ENCODE measurements at regions of chr7 and their contacts with region 1.

Region 1: GRCh38 chr7:24381894-24382505 is 98.0 kb downstream of the NPY start:
- H3K4me3 ChIP-seq: no peak overlapping the region
- H3K27ac ChIP-seq: no peak overlapping the region
- H3K4me1 ChIP-seq: no peaks in the 10 kb centered on the region
- CTCF ChIP-seq: 0 out of 2 replicates have a peak, but pooled peaks have one; percentile 30

Region 2: GRCh38 chr7:23938937-23939552 is 443.0 kb before region 1 on chr7:
- CTCF ChIA-PET with region 1: interaction called, 13 read pairs
- POLR2A ChIA-PET with region 1: no interaction called
- H3K4me3 ChIP-seq: no peak overlapping the region
- H3K27ac ChIP-seq: no peak overlapping the region
- H3K4me1 ChIP-seq: no peaks in the 10 kb centered on the region
- CTCF ChIP-seq: peak; percentile 39; the same call in 1 of the 2 replicates

Region 3: GRCh38 chr7:24135003-24135817 is 246.8 kb before region 1 on chr7:
- CTCF ChIA-PET with region 1: no interaction called
- POLR2A ChIA-PET with region 1: no interaction called
- H3K4me3 ChIP-seq: no peak overlapping the region
- H3K27ac ChIP-seq: no peak overlapping the region
- H3K4me1 ChIP-seq: no peaks in the 10 kb centered on the region
- CTCF ChIP-seq: no peak

Region 4: DNA sequence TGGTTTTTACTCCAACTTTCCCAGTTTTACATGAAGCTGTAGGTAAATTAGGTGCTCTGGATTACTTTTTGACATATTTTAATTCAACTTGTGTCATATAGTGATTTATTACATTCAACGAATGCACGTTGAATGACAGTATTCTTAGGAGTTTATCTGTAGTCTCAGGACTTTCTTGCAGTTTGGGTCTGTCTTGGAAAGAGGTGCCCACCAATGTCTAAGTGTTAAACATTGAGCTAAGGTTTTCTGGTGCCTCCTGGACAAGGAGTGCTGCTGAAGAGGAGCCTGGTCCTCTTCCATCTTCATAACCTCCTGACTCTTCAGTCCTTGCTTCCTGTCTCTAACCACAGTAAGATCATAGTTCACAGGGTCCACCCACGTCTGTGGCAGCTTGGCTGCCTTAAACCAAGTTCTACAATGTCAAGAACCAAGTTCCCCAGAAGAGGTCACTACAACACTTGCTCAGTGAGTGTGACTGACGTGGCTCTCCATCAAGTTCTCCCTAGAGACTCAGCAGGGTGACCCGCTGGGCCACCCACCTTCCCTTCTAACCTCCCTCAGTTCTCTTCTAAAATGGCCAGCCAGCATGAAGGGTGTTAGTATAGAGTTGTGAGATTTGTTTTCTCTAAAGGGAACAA is 91.9 kb before region 1 on chr7:
- CTCF ChIA-PET with region 1: interaction called, 40 read pairs
- POLR2A ChIA-PET with region 1: no interaction called
- H3K4me3 ChIP-seq: no peak overlapping the region
- H3K27ac ChIP-seq: no peak overlapping the region
- H3K4me1 ChIP-seq: no peaks in the 10 kb centered on the region
- CTCF ChIP-seq: peak; percentile 56; the same call in 1 of the 2 replicates

Measured in HEK293 (cell line).